A673 (cell line): ENCODE measurements at regions of chr19 and their contacts with region 1.

Region 1: DNA sequence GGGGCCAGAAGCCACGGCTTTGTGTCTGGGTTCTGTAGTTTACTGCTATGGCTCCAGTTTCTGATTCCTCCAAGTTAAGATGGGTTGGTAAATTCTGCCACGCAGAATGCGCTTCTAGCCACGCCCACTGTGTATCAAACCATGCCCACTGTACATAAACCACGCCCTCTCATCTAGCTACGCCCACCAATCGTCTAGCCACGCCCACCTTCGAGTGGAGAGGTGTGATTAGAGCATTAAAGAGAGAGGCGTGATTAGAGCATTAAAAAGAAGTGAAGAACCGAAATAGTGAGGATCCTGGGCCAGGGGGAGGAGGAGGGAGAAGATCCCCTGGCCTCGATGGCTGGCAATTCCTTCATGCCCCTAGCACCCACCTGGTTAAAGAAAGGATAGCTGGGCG is 43.7 kb upstream of the ADGRE5 start:
- DNase-seq: peak; percentile 72
- H3K4me3 ChIP-seq: no peak overlapping the region
- H3K27ac ChIP-seq: no peak overlapping the region
- H3K4me1 ChIP-seq: peaks cover 5% of the 10 kb centered on the region
- H3K27me3 ChIP-seq: no peaks in the 10 kb centered on the region
- CTCF ChIP-seq: no peak

Region 2: DNA sequence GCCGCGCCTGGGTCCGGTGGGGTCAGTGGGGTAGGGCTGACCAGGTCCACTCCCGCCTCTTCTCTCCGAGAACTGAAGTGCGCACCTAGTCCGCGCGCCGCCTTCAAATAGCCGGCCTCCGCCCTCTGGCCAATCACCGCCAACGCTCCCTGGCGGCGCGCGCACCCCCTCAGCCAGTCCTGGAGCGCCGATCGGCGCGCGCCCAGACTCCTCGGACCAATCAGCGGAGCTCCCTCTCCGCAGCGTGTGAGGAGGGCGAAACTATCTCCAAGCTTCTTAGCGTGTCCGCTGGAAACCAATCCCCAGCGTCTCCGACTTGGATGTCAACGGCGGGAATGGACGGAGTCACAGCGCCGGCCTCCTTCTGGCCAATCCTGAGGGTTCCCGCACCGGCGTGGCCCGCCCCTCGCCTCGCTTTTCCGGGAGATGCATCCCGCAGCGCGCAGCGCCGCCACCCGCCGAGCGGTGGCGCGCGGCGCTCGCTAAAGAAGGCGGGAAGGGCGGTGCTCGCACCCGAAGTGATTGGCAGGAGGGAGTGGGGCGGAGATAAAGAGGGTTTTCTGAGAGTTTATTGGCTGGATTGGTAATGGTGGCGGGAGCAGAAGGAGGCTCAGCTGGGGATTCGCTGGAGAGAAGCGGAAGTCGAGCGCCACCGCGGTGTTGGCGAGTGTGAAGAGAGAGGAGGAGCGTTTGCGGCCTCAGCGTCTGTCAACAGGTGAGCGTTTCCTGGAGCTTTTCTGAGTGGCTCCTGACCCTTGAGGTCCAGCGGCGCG is 200.8 kb before region 1 on chr19 and contains the start of gene ASF1B:
- CTCF ChIA-PET with region 1: no interaction called
- POLR2A ChIA-PET with region 1: no interaction called
- intact Hi-C with region 1: no loop called
- DNase-seq: peak; percentile 100
- H3K4me3 ChIP-seq: peak within 1 kb of the TSS; percentile 89
- H3K27ac ChIP-seq: peak within 1 kb of the TSS; percentile 84
- H3K4me1 ChIP-seq: peaks cover 21% of the 10 kb centered on the region
- H3K27me3 ChIP-seq: no peaks in the 10 kb centered on the region
- CTCF ChIP-seq: peak; percentile 91
- total RNA-seq, gene ASF1B: 50.0 and 54.6 TPM in 2 replicates

Region 3: GRCh38 chr19:14189415-14189814 is 148.1 kb before region 1 on chr19:
- CTCF ChIA-PET with region 1: interaction called, 14 read pairs
- POLR2A ChIA-PET with region 1: no interaction called
- intact Hi-C with region 1: no loop called
- DNase-seq: no peak
- H3K4me3 ChIP-seq: no peak overlapping the region
- H3K27ac ChIP-seq: no peak overlapping the region
- H3K4me1 ChIP-seq: peaks cover 5% of the 10 kb centered on the region
- H3K27me3 ChIP-seq: no peaks in the 10 kb centered on the region
- CTCF ChIP-seq: no peak

Region 4: DNA sequence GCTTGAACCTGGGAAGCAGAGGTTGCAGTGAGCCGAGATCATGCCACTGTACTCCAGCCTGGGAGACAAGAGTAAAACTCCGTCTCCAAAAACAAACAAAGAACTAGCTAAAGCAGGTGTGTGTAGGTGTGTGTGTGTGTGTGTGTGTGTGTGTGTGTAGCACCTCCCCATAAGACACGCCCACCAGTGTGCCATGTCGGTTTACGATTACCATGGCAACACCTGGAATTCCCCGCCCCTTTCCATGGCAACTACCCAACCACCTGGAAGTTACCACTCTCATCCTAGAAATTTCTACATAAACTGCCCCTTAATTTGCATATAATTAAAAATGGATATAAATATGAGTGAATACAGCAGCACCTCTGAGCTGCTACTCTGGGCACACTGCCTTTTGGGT is 37.2 kb before region 1 on chr19:
- CTCF ChIA-PET with region 1: no interaction called
- POLR2A ChIA-PET with region 1: no interaction called
- intact Hi-C with region 1: no loop called
- DNase-seq: no peak
- H3K4me3 ChIP-seq: no peak overlapping the region
- H3K27ac ChIP-seq: no peak overlapping the region
- H3K4me1 ChIP-seq: no peaks in the 10 kb centered on the region
- H3K27me3 ChIP-seq: no peaks in the 10 kb centered on the region
- CTCF ChIP-seq: no peak

Region 5: GRCh38 chr19:14661372-14661924 is 323.9 kb after region 1 on chr19:
- CTCF ChIA-PET with region 1: no interaction called
- POLR2A ChIA-PET with region 1: no interaction called
- intact Hi-C with region 1: loop called (anchors 10 kb)
- DNase-seq: no peak
- H3K4me3 ChIP-seq: no peak overlapping the region
- H3K27ac ChIP-seq: no peak overlapping the region
- H3K4me1 ChIP-seq: no peaks in the 10 kb centered on the region
- H3K27me3 ChIP-seq: no peaks in the 10 kb centered on the region
- CTCF ChIP-seq: no peak